B cell (primary cell): ENCODE measurements at regions of chr2 and their contacts with region 1.

Region 1: GRCh38 chr2:113138428-113139322 is 11.3 kb downstream of the IL1RN start:
- DNase-seq: peak; percentile 88
- ATAC-seq: peak; percentile 82
- H3K4me3 ChIP-seq: peak overlapping the region in 1 of 5 experiments; percentile 19
- H3K4me3 Mint-ChIP-seq: peak overlapping the region; percentile 71
- H3K27ac ChIP-seq: peak overlapping the region in 1 of 2 donors; percentile 24
- H3K27ac Mint-ChIP-seq: peak overlapping the region; percentile 73
- H3K4me1 ChIP-seq: peaks cover 11 to 13% of the 10 kb centered on the region in 2 donors
- H3K4me1 Mint-ChIP-seq: peaks cover 15% of the 10 kb centered on the region
- H3K27me3 ChIP-seq: no peaks in the 10 kb centered on the region
- H3K27me3 Mint-ChIP-seq: no peaks in the 10 kb centered on the region
- CTCF ChIP-seq: peak; percentile 86

Region 2: DNA sequence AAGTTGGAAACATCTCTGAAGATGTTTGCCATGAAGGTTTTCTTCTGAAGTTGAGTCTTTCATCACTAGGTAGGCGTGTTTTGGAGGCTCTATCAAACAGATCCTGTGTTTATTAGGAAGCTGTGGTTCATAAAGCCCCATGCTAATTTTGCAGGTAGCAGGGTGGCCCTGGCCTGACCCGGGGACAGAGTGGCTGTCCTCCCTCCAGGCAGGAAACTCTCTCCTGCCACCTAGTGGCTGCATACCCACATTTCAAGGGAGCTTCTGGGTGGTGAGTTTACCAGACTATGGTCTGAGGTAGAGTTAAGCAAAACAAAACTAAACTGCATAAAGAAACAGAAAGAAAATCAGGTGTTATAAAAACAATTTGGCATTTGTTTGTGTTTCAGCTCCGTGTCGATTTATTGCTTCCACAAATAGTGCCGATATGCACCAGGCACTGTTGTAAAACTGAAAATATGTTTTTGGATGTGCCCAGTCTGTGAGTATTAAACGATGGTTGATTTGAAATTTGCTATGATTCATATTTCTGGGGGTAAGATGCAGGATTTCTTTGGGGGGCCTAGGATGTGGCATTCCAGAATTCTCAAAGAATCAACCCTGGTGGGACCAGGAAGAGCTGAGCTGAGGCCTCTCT is 253.7 kb before region 1 on chr2:
- CTCF ChIA-PET with region 1: no interaction called
- POLR2A ChIA-PET with region 1: no interaction called
- intact Hi-C with region 1: no loop called
- DNase-seq: peak; percentile 65
- ATAC-seq: peak; percentile 75
- H3K4me3 ChIP-seq: no peak overlapping the region
- H3K4me3 Mint-ChIP-seq: no peak overlapping the region
- H3K27ac ChIP-seq: no peak overlapping the region
- H3K27ac Mint-ChIP-seq: no peak overlapping the region
- H3K4me1 ChIP-seq: peaks cover 7 to 15% of the 10 kb centered on the region in 2 donors
- H3K4me1 Mint-ChIP-seq: peaks cover 14% of the 10 kb centered on the region
- H3K27me3 ChIP-seq: no peaks in the 10 kb centered on the region
- H3K27me3 Mint-ChIP-seq: no peaks in the 10 kb centered on the region
- CTCF ChIP-seq: peak; percentile 90

Region 3: GRCh38 chr2:112928856-112929255 is 209.8 kb before region 1 on chr2:
- CTCF ChIA-PET with region 1: no interaction called
- POLR2A ChIA-PET with region 1: no interaction called
- intact Hi-C with region 1: no loop called
- DNase-seq: no peak
- ATAC-seq: no peak
- H3K4me3 ChIP-seq: no peak overlapping the region
- H3K4me3 Mint-ChIP-seq: no peak overlapping the region
- H3K27ac ChIP-seq: no peak overlapping the region
- H3K27ac Mint-ChIP-seq: no peak overlapping the region
- H3K4me1 ChIP-seq: peaks cover 0 to 3% of the 10 kb centered on the region in 2 donors
- H3K4me1 Mint-ChIP-seq: peaks cover 6% of the 10 kb centered on the region
- H3K27me3 ChIP-seq: peaks cover 0 to 5% (median 0%) of the 10 kb centered on the region in 4 experiments
- H3K27me3 Mint-ChIP-seq: peaks cover 7% of the 10 kb centered on the region
- CTCF ChIP-seq: no peak

Region 4: GRCh38 chr2:113080134-113080533 is 58.5 kb before region 1 on chr2:
- CTCF ChIA-PET with region 1: interaction called, 61 read pairs
- POLR2A ChIA-PET with region 1: no interaction called
- intact Hi-C with region 1: loop called (anchors 1 kb)
- DNase-seq: peak; percentile 59
- ATAC-seq: peak; percentile 51
- H3K4me3 ChIP-seq: no peak overlapping the region
- H3K4me3 Mint-ChIP-seq: no peak overlapping the region
- H3K27ac ChIP-seq: no peak overlapping the region
- H3K27ac Mint-ChIP-seq: no peak overlapping the region
- H3K4me1 ChIP-seq: no peaks in the 10 kb centered on the region
- H3K4me1 Mint-ChIP-seq: peaks cover 2% of the 10 kb centered on the region
- H3K27me3 ChIP-seq: peaks cover 0 to 14% (median 6%) of the 10 kb centered on the region in 4 experiments
- H3K27me3 Mint-ChIP-seq: peaks cover 39% of the 10 kb centered on the region
- CTCF ChIP-seq: peak; percentile 80

Region 5: DNA sequence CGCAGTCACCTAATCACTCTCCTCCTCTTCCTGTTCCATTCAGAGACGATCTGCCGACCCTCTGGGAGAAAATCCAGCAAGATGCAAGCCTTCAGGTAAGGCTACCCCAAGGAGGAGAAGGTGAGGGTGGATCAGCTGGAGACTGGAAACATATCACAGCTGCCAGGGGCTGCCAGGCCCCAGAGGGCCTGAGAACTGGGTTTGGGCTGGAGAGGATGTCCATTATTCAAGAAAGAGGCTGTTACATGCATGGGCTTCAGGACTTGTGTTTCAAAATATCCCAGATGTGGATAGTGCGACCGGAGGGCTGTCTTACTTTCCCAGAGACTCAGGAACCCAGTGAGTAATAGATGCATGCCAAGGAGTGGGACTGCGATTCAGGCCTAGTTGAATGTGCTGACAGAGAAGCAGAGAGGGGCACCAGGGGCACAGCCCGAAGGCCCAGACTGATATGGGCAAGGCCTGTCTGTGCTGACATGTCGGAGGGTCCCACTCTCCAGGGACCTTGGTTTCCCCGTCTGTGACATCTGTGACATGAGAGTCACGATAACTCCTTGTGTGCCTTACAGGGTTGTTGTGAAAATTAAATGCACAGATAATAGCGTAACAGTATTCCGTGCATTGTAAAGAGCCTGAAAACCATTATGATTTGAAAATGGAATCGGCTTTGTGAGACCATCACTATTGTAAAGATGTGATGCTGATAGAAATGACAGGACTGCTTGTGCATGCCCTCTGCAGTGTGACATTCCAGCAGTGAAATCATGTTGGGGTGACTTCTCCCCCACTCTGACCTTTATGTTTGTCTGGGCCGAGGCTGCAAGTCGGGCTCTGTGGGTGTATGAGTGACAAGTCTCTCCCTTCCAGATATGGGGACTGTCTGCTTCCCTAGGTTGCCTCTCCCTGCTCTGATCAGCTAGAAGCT is 10.8 kb before region 1 on chr2:
- CTCF ChIA-PET with region 1: interaction called, 17 read pairs
- POLR2A ChIA-PET with region 1: no interaction called
- intact Hi-C with region 1: no loop called
- DNase-seq: no peak
- ATAC-seq: no peak
- H3K4me3 ChIP-seq: peak overlapping the region in 1 of 5 experiments; percentile 48
- H3K4me3 Mint-ChIP-seq: no peak overlapping the region
- H3K27ac ChIP-seq: no peak overlapping the region
- H3K27ac Mint-ChIP-seq: no peak overlapping the region
- H3K4me1 ChIP-seq: peaks cover 12 to 15% of the 10 kb centered on the region in 2 donors
- H3K4me1 Mint-ChIP-seq: peaks cover 16% of the 10 kb centered on the region
- H3K27me3 ChIP-seq: peaks cover 0 to 5% (median 2%) of the 10 kb centered on the region in 4 experiments
- H3K27me3 Mint-ChIP-seq: peaks cover 16% of the 10 kb centered on the region
- CTCF ChIP-seq: no peak

Region 6: DNA sequence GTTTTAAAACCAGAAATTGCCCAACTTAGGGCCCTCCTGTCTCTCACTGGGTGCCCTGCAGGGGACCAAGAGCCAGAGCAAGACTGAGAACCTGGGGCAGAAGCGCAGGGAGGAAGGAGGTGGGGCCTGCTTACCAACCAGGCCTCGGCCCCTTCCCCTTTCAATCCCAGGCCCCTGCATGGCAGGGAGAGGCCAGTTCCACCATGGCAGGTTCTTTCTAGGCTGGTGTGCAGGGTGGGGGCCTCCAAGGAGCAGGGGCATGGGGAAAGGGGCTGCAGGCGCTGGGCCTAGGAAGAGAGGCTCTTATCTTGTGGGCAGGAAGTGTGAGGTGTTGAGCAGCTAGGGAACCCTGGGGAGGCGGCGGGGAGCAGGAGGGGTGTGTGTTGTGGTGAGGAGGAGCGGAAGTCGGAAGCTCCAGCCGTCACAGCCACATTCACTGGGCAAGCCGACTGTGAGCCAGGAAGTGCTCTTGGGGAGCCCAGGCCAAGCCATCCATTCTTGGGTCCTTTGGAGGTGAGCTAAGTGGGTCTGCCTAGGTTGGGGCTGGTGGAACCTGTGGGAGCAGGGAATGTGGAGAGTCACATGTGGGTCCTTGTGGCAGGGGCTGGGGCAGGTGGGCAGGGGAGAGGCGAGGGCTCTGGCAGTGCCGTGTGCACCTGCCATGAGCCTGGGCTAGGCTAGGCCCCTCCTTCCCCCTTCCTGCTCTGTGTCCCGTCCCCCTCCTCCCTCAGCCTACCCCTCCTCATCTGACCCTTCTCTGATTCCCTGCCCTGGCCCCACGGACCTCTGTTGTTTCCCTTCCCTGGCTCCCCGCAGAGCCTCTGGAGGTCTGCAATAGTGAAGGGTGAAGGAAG is 35.1 kb after region 1 on chr2 and contains the start of gene PSD4:
- CTCF ChIA-PET with region 1: interaction called, 327 read pairs
- POLR2A ChIA-PET with region 1: interaction called, 7 read pairs
- intact Hi-C with region 1: loop called (anchors 1 kb)
- DNase-seq: peak; percentile 83
- ATAC-seq: peak; percentile 73
- H3K4me3 ChIP-seq: peak within 1 kb of the TSS; percentile 58 to 95 (median 77)
- H3K4me3 Mint-ChIP-seq: peak within 1 kb of the TSS; percentile 91
- H3K27ac ChIP-seq: peak within 1 kb of the TSS; percentile 87 to 91
- H3K27ac Mint-ChIP-seq: peak within 1 kb of the TSS; percentile 92
- H3K4me1 ChIP-seq: peaks cover 69 to 90% of the 10 kb centered on the region in 2 donors
- H3K4me1 Mint-ChIP-seq: peaks cover 86% of the 10 kb centered on the region
- H3K27me3 ChIP-seq: no peaks in the 10 kb centered on the region
- H3K27me3 Mint-ChIP-seq: no peaks in the 10 kb centered on the region
- CTCF ChIP-seq: no peak
- total RNA-seq, gene PSD4: 203 and 217 TPM in 2 replicates

Region 7: GRCh38 chr2:113203901-113204519 is 65.3 kb after region 1 on chr2:
- CTCF ChIA-PET with region 1: interaction called, 590 read pairs
- POLR2A ChIA-PET with region 1: interaction called, 11 read pairs
- intact Hi-C with region 1: loop called (anchors 1 kb)
- DNase-seq: peak; percentile 82
- ATAC-seq: peak; percentile 78
- H3K4me3 ChIP-seq: no peak overlapping the region
- H3K4me3 Mint-ChIP-seq: no peak overlapping the region
- H3K27ac ChIP-seq: peak overlapping the region; percentile 42 to 53
- H3K27ac Mint-ChIP-seq: peak overlapping the region; percentile 90
- H3K4me1 ChIP-seq: peaks cover 10 to 16% of the 10 kb centered on the region in 2 donors
- H3K4me1 Mint-ChIP-seq: peaks cover 24% of the 10 kb centered on the region
- H3K27me3 ChIP-seq: no peaks in the 10 kb centered on the region
- H3K27me3 Mint-ChIP-seq: no peaks in the 10 kb centered on the region
- CTCF ChIP-seq: peak; percentile 80

Region 8: DNA sequence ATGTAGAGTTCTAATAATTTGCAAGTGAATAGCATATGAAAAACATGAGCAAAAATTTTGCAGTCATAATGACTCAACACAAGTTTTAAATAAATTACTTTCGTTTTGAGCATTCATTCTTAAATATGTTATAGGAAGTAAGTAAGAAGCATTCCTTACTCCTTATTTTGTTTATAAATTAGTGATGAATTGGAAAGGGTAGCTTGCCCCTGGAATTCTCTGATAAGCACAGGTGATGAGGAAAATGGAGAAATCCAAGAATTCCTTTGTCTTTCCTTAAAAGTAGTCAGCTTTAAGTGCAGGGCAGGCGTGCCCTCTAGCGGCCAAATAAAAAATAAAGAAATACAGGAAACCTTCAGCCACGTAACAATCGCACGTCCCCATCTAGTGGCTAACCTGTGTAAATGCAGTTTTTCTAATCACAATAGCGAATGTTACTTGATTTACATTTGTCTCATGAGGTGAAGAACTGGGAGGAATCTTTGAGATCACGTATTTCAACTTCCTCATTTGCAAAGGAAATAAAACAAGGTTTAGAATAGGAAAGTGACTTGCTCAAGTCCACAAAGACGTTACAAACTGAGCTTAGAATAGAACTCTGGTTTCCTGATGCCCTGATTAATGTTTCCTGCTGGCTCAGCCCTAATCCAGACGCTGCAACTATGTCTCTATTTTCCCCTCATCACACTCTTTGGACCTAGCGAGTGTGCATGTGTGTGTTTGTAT is 251.6 kb after region 1 on chr2:
- CTCF ChIA-PET with region 1: interaction called, 53 read pairs
- POLR2A ChIA-PET with region 1: no interaction called
- intact Hi-C with region 1: loop called (anchors 1 kb)
- DNase-seq: peak; percentile 89
- ATAC-seq: peak; percentile 97
- H3K4me3 ChIP-seq: peak overlapping the region; percentile 15 to 59 (median 42)
- H3K4me3 Mint-ChIP-seq: peak overlapping the region; percentile 86
- H3K27ac ChIP-seq: peak overlapping the region; percentile 80 to 87
- H3K27ac Mint-ChIP-seq: peak overlapping the region; percentile 97
- H3K4me1 ChIP-seq: peaks cover 8% of the 10 kb centered on the region in 2 donors
- H3K4me1 Mint-ChIP-seq: peaks cover 14% of the 10 kb centered on the region
- H3K27me3 ChIP-seq: no peaks in the 10 kb centered on the region
- H3K27me3 Mint-ChIP-seq: no peaks in the 10 kb centered on the region
- CTCF ChIP-seq: peak; percentile 100